Dorsolateral prefrontal cortex (tissue), 120 donors: ENCODE measurements at regions of chr16 and their contacts with region 1.

Region 1: GRCh38 chr16:56681939-56682702 is at the start of gene MT1X:
- DNase-seq: peak; percentile 72 to 97 (median 90)
- H3K4me3 ChIP-seq: peak within 1 kb of the TSS; percentile 39 to 78 (median 66)
- H3K27ac ChIP-seq: peak within 1 kb of the TSS in 58 of 59 donors; percentile 23 to 93 (median 81)
- H3K27me3 ChIP-seq: no peaks in the 10 kb centered on the region
- CTCF ChIP-seq: peak in 17 of 56 donors; percentile 8 to 44 (median 17)
- total RNA-seq, gene MT1X: 69.5 to 909 (median 191) TPM

Region 2: GRCh38 chr16:56589141-56590039 is 92.7 kb before region 1 on chr16 and contains the start of gene MT3:
- intact Hi-C with region 1: no loop called
- DNase-seq: peak; percentile 84 to 93 (median 88)
- H3K4me3 ChIP-seq: peak within 1 kb of the TSS; percentile 51 to 94 (median 79)
- H3K27ac ChIP-seq: peak within 1 kb of the TSS; percentile 61 to 99 (median 95)
- H3K27me3 ChIP-seq: no peaks in the 10 kb centered on the region
- CTCF ChIP-seq: peak in 43 of 56 donors; percentile 6 to 61 (median 33)
- total RNA-seq, gene MT3: 739 to 2,436 (median 1,144) TPM

Region 3: GRCh38 chr16:56632156-56632847 is 49.8 kb before region 1 on chr16 and contains the start of gene MT1M:
- intact Hi-C with region 1: loop called in 1 of 2 experiments (anchors 5 kb)
- DNase-seq: peak in 5 of 10 donors; percentile 19 to 73 (median 50)
- H3K4me3 ChIP-seq: peak within 1 kb of the TSS; percentile 35 to 72 (median 59)
- H3K27ac ChIP-seq: peak within 1 kb of the TSS in 53 of 59 donors; percentile 12 to 86 (median 71)
- H3K27me3 ChIP-seq: peaks cover 0 to 44% (median 19%) of the 10 kb centered on the region in 45 donors
- CTCF ChIP-seq: peak in 4 of 56 donors; percentile 4 to 17 (median 16)
- total RNA-seq, gene MT1M: 16.9 to 238 (median 60.1) TPM

Region 4: GRCh38 chr16:56722200-56722842 is 40.2 kb after region 1 on chr16:
- intact Hi-C with region 1: no loop called
- DNase-seq: no peak
- H3K4me3 ChIP-seq: no peak overlapping the region
- H3K27ac ChIP-seq: no peak overlapping the region
- H3K27me3 ChIP-seq: no peaks in the 10 kb centered on the region
- CTCF ChIP-seq: no peak